ENCODE measurements at regions of chr10 and their contacts with region 1.

Region 1: DNA sequence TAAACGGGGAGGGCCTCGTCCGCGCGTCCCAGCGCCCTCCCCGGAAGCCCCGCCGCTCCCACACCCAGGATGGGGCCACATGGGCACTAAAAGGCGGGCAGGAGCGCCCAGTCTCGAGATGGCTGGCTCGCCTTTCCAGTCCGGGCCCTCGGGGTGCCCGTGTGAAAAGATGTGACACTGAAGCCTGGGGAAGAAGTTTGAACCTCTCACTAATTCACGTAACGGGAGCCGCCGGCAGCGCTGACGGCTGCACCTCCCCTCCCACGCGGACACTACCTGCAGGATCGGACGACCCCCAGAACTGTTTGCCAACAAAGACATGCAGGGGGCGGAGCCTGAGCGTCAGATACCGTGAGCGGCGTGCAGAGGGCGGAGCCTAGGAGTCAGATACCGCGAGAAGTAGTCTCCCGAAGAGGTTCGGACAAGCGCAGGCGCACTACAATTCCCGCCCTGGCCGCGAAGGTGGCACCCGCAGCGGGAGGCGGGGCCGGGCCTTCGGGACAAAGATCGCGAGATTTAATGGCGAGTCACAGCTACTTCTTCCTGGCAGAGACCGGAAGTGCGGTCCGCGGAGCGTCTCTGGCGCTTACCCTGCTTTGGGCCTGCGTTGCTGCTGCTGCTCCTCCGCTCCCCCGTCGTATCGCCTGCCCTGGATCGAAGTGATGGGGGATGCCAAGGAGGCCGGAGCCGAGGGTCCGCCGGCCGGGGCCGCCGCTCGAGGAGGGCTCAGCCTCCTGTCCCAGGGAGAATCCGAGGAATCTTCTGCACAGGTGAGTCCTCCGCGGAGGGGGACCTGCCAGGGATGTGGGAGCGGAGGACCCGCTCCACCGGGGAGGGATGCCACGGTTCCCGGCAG is at the start of gene EDRF1:
- DNase-seq: peak; percentile 99
- H3K4me3 Mint-ChIP-seq: peak within 1 kb of the TSS; percentile 96
- H3K27ac Mint-ChIP-seq: peak within 1 kb of the TSS; percentile 98
- H3K4me1 Mint-ChIP-seq: peaks cover 21% of the 10 kb centered on the region
- H3K27me3 Mint-ChIP-seq: no peaks in the 10 kb centered on the region
- total RNA-seq, gene EDRF1: 40.3 and 40.7 TPM in 2 replicates

Region 2: DNA sequence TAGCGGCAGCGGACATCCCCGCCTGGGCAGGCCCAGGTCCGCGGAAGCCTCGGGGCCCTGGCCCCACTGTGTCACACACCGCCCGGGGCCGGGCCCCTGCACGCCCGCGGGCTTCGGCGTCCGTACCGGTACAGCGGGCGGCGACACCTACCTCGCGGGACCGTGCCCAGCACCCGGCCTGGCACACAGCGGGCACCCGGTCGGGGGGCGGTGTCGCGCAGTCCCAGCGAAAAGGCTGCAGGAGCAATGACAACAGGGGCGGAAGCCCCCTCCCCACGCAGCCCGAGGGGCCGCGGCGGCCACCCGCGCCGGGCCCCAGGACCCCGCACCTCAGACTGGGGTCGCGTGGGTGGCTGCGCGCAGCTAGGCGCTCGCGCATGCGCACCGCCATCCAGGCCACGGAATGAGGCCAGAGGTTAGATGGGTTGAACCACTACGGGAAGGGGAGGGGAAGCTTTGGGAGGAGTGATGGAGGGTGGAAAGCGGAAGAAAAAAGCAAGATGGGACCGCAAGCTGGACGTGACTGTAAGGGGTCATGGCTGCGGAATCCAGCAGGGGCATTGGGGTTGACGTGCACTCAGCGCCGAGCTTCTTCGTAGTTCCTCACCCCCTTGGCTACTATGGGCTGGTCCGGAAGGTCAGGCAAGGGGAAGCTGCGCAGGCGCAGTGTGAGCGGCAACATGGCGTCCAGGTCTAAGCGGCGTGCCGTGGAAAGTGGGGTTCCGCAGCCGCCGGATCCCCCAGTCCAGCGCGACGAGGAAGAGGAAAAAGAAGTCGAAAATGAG is 103.7 kb after region 1 on chr10 and contains the starts of genes BCCIP and UROS:
- intact Hi-C with region 1: loop called (anchors 1 kb)
- DNase-seq: peak; percentile 89
- H3K4me3 Mint-ChIP-seq: peak within 1 kb of the TSS; percentile 82
- H3K27ac Mint-ChIP-seq: peak within 1 kb of the TSS; percentile 83
- H3K4me1 Mint-ChIP-seq: peaks cover 18% of the 10 kb centered on the region
- H3K27me3 Mint-ChIP-seq: no peaks in the 10 kb centered on the region
- total RNA-seq, gene BCCIP: 110 and 114 TPM in 2 replicates
- total RNA-seq, gene UROS: 45.3 and 46.9 TPM in 2 replicates

Region 3: DNA sequence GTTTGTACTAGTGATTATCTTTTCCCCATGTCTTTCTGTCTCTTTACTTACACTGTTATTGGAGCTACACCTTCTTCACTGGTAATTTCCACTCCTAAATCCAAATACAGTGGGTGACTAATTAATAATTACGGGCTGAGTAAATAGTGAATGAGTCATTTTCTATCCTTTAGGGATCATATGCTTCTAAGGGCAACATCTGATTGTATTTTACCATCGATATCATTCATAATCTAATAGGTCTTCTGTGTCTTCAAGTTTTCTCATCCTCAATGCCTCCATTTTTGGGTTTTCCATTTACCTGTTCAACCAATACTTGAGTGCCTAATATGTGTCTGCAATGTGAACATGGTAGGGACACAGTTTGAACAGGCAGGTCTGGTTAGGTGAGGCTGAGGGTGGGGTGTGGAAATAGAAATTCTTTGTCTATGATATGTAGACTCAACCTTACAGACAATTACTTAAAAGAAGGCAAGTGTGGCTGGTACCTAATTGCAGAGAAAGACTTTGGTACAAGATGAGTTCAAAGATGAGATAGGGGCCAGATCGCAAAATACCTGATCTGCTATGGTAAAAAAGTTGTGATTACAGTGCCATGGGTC is 167.6 kb after region 1 on chr10:
- intact Hi-C with region 1: loop called (anchors 10 kb)
- DNase-seq: no peak
- H3K4me3 Mint-ChIP-seq: no peak overlapping the region
- H3K27ac Mint-ChIP-seq: no peak overlapping the region
- H3K4me1 Mint-ChIP-seq: no peaks in the 10 kb centered on the region
- H3K27me3 Mint-ChIP-seq: no peaks in the 10 kb centered on the region